ENCODE measurements at regions of chr1 and their contacts with region 1.

Region 1: DNA sequence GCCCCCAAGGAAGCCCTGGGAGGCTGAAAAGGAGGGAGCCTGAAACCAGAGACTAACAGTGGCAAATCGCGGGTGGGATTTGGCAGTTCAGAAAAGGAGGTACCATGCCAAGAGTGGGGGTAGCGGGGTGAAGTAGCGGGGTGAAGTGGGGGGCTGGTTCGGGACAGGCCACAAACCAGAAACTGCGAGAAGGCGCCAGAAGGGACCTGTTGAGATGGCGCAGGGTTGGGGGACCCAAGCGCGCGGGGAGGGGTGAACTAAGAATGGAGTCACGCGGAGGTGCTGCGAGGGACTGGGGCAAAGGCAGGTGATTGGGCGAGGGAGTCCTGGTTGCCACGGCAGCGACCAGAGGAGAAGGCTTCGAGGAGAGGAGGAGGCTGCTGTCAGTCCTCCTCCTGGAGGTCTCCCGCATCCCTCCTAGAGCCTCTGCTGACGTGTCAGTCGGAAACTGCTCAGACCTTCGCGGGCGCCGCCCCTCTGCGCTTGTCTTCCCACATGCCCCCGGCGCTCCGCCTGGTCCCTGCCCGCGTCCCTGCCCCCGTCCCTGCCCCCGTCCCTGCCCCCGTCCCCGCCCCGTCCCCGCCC is 438 bp upstream of the MIA3 start:
- DNase-seq: peak; percentile 90 to 94
- H3K4me3 ChIP-seq: peak overlapping the region; percentile 44
- H3K4me3 Mint-ChIP-seq: peak overlapping the region; percentile 85
- H3K27ac Mint-ChIP-seq: peak overlapping the region; percentile 78
- H3K4me1 ChIP-seq: 0 out of 2 replicates have a peak, but pooled peaks cover 6% of the 10 kb centered on the region
- H3K4me1 Mint-ChIP-seq: peaks cover 6% of the 10 kb centered on the region
- H3K27me3 ChIP-seq: no peaks in the 10 kb centered on the region
- H3K27me3 Mint-ChIP-seq: peaks cover 16% of the 10 kb centered on the region
- CTCF ChIP-seq: no peak

Region 2: DNA sequence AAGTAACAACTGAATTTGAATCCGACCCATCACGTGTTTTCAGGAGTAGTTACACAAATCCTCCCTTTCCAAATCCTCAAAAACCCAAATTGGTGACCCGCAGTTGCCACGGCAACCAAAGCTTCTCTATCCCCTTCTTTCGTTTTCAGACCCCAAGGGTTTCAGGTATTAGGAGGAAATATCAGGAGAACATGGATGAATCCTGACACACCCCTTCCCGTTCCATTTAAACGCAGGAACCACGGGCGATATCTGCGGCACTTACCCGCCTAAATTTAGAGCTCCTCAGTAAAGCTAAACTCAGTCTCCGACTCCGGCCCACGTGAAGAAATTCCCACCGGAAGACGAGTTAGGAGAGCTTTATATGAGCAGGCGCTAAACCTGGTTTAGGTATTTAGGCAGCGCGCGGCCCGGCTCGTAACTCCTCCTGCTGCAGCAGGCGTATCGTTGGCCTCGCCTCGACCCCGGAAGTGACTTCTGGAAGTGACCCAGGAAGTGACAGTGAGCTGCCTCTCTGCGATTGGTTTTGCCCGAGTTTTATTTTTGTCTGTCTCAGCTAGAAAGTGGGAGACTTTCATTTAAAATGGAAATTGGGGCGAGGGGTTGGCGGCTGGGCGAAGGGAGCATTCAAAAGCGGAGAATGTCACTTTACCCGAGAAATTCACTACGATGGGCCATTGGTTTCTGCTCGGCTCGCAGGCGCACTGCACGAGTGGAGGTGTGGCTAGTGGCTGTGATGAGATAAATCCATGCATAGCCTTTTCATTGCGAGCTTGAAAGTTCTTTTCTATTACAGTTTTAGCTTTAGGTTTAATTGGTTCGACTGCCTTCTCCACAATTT is 27.8 kb before region 1 on chr1 and contains the start of gene TAF1A:
- CTCF ChIA-PET with region 1: no interaction called
- POLR2A ChIA-PET with region 1: interaction called, 3 read pairs
- intact Hi-C with region 1: loop called (anchors 1 kb)
- DNase-seq: peak; percentile 85 to 89
- H3K4me3 ChIP-seq: peak within 1 kb of the TSS; percentile 66
- H3K4me3 Mint-ChIP-seq: peak within 1 kb of the TSS; percentile 92
- H3K27ac Mint-ChIP-seq: peak within 1 kb of the TSS; percentile 92
- H3K4me1 ChIP-seq: peaks cover 11% of the 10 kb centered on the region; the same call in 1 of the 2 replicates
- H3K4me1 Mint-ChIP-seq: peaks cover 20% of the 10 kb centered on the region
- H3K27me3 ChIP-seq: no peaks in the 10 kb centered on the region
- H3K27me3 Mint-ChIP-seq: no peaks in the 10 kb centered on the region
- CTCF ChIP-seq: no peak
- total RNA-seq, gene TAF1A: 14.8 and 15.9 TPM in 2 replicates

Region 3: DNA sequence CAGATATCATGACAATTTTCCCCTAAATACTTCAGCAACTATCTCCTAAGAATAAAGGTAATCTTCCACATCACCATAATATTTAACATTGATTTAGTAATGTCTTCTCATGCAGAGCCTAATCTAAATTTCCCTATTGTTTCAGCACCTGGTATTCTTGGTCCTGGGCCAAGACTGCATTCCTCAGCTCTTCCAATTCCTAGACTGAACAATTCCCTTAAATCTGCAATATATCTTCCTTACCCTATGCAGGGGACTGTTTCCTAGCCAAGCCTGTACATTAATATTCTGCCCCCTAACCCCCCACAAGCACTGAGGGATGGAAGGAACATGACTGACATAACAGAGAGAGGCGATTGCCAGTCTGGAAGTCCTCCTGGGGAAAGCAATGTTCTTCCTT is 168.7 kb after region 1 on chr1:
- CTCF ChIA-PET with region 1: no interaction called
- POLR2A ChIA-PET with region 1: no interaction called
- intact Hi-C with region 1: no loop called
- DNase-seq: no peak
- H3K4me3 ChIP-seq: no peak overlapping the region
- H3K4me3 Mint-ChIP-seq: no peak overlapping the region
- H3K27ac Mint-ChIP-seq: no peak overlapping the region
- H3K4me1 ChIP-seq: no peaks in the 10 kb centered on the region
- H3K4me1 Mint-ChIP-seq: peaks cover 8% of the 10 kb centered on the region
- H3K27me3 ChIP-seq: no peaks in the 10 kb centered on the region
- H3K27me3 Mint-ChIP-seq: peaks cover 4% of the 10 kb centered on the region
- CTCF ChIP-seq: no peak